Activated CD4-positive, alpha-beta memory T cell treated with anti-CD3 and anti-CD28 coated beads for 36 hours (primary cell): ENCODE measurements at regions of chr6 and their contacts with region 1.

Region 1: GRCh38 chr6:79869600-79870084 is 77.7 kb downstream of the ELOVL4 start:
- DNase-seq: peak; percentile 87
- H3K4me3 Mint-ChIP-seq: peak overlapping the region; percentile 20
- H3K27ac Mint-ChIP-seq: peak overlapping the region; percentile 5
- H3K4me1 Mint-ChIP-seq: peaks cover 7% of the 10 kb centered on the region
- H3K27me3 Mint-ChIP-seq: peaks cover 6% of the 10 kb centered on the region

Region 2: DNA sequence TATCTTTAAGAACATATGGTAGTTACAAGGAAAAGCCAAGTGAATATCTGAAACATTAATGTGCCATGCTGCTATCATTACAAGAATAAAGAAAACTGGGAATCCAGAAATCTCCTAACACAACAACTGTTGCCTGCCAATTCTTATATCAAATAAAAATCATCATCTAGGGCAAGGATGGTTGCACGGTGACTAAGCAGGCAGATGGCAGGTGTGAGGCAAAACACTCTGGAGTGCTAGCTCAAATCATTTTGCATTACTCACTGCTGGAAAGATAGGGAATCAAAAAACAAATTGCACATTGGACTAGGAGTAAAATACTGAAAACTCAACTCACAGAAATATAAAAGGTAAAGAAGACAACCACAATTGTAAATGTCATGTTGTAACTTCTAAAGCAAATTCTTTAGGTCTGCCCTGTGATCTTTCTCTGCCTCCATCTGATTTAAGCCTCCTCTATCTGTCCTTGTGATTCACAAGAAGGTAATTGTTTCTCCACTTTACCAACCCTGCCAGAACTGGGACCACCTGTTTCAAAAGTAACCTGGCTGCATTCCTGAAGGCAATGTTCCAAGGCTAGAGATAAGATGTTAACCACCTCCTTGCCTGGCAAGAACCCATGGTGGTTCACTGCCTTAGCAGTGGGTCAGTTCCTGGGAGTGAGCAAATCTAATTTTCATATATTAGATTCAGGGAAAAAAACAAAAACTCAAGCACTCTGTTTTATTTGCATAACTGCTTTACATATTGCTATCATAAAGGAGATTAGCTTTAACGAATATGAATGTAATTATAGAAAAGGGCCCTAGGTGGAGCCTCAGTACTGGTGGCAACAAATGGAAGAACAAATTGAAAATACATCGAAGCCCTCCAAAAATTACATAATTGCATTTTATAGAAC is 299.3 kb before region 1 on chr6:
- CTCF ChIA-PET with region 1: interaction called, 4 read pairs
- POLR2A ChIA-PET with region 1: no interaction called
- intact Hi-C with region 1: loop called (anchors 1 kb)
- DNase-seq: no peak
- H3K4me3 Mint-ChIP-seq: no peak overlapping the region
- H3K27ac Mint-ChIP-seq: no peak overlapping the region
- H3K4me1 Mint-ChIP-seq: no peaks in the 10 kb centered on the region
- H3K27me3 Mint-ChIP-seq: peaks cover 1% of the 10 kb centered on the region

Region 3: DNA sequence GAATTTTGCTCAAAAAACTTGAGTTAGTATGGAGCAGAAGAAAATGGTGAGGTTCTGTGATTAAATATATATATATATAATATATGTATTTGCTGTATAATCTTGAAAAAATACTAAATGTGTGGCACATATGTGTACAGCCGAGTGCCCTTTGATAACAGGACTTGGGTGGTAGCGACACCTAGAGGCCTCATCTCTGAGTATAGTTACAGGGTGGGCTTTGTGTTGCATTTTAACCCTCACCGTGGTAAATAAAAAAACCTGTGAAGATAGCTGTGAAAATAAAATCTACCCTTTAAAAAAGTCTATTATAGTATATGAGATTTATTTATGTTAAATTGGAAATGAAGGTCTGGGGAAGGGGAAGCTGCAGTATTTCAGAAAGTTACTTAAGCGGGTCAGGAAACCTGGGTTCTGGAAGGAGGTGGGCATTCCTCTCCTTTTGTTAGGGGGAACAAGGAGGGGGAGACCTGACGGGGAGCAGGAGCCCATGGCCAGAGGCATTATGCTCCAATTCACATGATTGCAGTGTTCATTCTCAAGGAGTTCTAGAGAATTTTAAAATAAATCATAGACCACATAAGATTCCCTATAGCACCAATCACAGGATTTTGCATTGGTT is 155.8 kb before region 1 on chr6:
- CTCF ChIA-PET with region 1: interaction called, 4 read pairs
- POLR2A ChIA-PET with region 1: no interaction called
- intact Hi-C with region 1: loop called (anchors 5 kb)
- DNase-seq: peak; percentile 43
- H3K4me3 Mint-ChIP-seq: no peak overlapping the region
- H3K27ac Mint-ChIP-seq: no peak overlapping the region
- H3K4me1 Mint-ChIP-seq: no peaks in the 10 kb centered on the region
- H3K27me3 Mint-ChIP-seq: peaks cover 3% of the 10 kb centered on the region

Region 4: DNA sequence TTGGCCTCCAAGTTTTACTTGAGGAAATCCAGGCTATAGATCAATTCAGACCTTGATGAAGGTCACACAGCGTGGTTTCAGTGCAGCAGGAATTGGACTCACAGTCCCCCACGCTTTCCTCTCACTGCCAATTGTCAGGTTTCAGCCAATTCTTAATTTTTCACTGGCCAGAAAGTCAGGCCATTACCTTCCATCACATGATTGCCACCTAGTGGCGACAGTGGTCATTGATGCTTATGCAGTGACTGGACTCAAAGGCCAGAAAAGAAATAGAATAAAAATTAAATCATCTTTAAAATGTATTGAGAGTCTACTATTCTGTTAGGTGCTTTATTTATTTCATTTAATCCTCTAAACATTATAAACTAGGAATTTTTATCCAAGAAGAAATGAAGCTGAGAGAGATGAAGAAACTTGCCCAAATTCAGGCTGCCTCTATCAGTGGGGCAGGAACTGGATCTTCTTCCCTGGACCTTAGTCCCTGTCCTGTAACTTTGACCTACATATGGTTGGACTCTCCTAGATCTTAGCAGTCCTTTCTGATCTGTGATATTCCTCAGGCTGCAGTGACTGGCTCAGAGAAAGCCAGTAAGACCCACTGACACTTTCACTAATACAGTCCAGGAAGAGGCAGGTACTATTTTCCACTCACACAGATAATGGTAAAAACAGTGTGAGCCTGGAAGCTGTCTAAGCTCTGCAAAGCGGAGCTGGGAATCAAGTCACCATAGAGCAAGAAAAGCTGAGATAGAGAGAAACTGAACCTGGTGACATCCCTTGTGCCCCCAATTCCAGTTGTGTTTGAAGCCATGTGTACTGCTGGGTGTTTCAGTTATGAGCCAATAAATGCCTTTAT is 55.6 kb before region 1 on chr6:
- CTCF ChIA-PET with region 1: interaction called, 15 read pairs
- POLR2A ChIA-PET with region 1: no interaction called
- intact Hi-C with region 1: loop called (anchors 2 kb)
- DNase-seq: peak; percentile 75
- H3K4me3 Mint-ChIP-seq: no peak overlapping the region
- H3K27ac Mint-ChIP-seq: no peak overlapping the region
- H3K4me1 Mint-ChIP-seq: no peaks in the 10 kb centered on the region
- H3K27me3 Mint-ChIP-seq: no peaks in the 10 kb centered on the region

Region 5: GRCh38 chr6:80094017-80094416 is 224.4 kb after region 1 on chr6:
- CTCF ChIA-PET with region 1: interaction called, 7 read pairs
- POLR2A ChIA-PET with region 1: no interaction called
- intact Hi-C with region 1: loop called (anchors 2 kb)
- DNase-seq: no peak
- H3K4me3 Mint-ChIP-seq: no peak overlapping the region
- H3K27ac Mint-ChIP-seq: no peak overlapping the region
- H3K4me1 Mint-ChIP-seq: no peaks in the 10 kb centered on the region
- H3K27me3 Mint-ChIP-seq: peaks cover 2% of the 10 kb centered on the region